ENCODE measurements at regions of chr4 and their contacts with region 1.

Region 1: GRCh38 chr4:178412455-178412854 is 970.2 kb upstream of the AGA start:
- DNase-seq: no peak
- H3K4me3 ChIP-seq: no peak overlapping the region
- H3K4me3 Mint-ChIP-seq: no peak overlapping the region
- H3K27ac Mint-ChIP-seq: no peak overlapping the region
- H3K4me1 ChIP-seq: no peaks in the 10 kb centered on the region
- H3K4me1 Mint-ChIP-seq: peaks cover 5% of the 10 kb centered on the region
- H3K27me3 ChIP-seq: no peaks in the 10 kb centered on the region
- H3K27me3 Mint-ChIP-seq: no peaks in the 10 kb centered on the region
- CTCF ChIP-seq: no peak

Region 2: DNA sequence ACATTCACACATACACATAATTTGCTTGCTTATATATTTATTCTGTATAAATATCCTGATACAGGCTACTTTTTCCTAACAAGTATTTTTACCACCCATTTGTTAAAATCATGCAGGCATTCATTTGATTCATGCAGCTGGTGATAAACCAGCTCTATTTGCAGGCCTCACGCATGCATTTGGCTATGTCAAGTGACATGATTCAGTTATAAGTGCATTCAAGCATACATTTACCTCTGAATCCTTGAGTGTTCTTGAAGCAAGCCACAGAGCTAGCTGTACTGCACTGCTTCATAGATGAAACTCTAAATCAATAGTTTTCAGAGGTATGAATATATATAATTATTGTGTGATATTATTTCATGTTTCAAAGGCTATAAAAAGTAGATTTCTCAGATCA is 426.2 kb before region 1 on chr4:
- CTCF ChIA-PET with region 1: no interaction called
- POLR2A ChIA-PET with region 1: no interaction called
- intact Hi-C with region 1: no loop called
- DNase-seq: no peak
- H3K4me3 ChIP-seq: no peak overlapping the region
- H3K4me3 Mint-ChIP-seq: no peak overlapping the region
- H3K27ac Mint-ChIP-seq: no peak overlapping the region
- H3K4me1 ChIP-seq: no peaks in the 10 kb centered on the region
- H3K4me1 Mint-ChIP-seq: no peaks in the 10 kb centered on the region
- H3K27me3 ChIP-seq: no peaks in the 10 kb centered on the region
- H3K27me3 Mint-ChIP-seq: no peaks in the 10 kb centered on the region
- CTCF ChIP-seq: no peak

Region 3: GRCh38 chr4:178395798-178396197 is 16.7 kb before region 1 on chr4:
- CTCF ChIA-PET with region 1: no interaction called
- POLR2A ChIA-PET with region 1: no interaction called
- intact Hi-C with region 1: loop called (anchors 1 kb)
- DNase-seq: peak in 1 of 2 experiments; percentile 17
- H3K4me3 ChIP-seq: no peak overlapping the region
- H3K4me3 Mint-ChIP-seq: no peak overlapping the region
- H3K27ac Mint-ChIP-seq: no peak overlapping the region
- H3K4me1 ChIP-seq: no peaks in the 10 kb centered on the region
- H3K4me1 Mint-ChIP-seq: no peaks in the 10 kb centered on the region
- H3K27me3 ChIP-seq: no peaks in the 10 kb centered on the region
- H3K27me3 Mint-ChIP-seq: no peaks in the 10 kb centered on the region
- CTCF ChIP-seq: peak in 1 of 2 experiments; percentile 42

Region 4: DNA sequence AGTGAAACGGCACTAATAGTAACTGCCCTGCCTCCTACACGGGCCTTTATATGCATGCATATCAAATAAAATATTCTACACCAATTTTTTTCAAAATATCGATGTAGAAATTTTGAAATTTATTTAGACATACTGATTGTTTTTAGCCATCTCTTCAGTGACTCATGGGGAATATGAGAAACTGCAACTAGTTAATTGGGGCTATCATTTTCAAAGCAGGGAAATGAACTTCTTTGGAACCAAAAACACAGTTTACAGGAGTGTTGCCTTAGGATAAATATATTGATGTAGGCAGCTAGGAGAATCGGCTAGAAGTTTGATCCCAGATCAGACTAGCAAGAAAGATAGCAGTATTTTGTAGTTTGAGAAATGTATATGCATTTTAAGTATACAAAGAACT is 40.6 kb after region 1 on chr4:
- CTCF ChIA-PET with region 1: no interaction called
- POLR2A ChIA-PET with region 1: no interaction called
- intact Hi-C with region 1: loop called (anchors 2 kb)
- DNase-seq: no peak
- H3K4me3 ChIP-seq: no peak overlapping the region
- H3K4me3 Mint-ChIP-seq: no peak overlapping the region
- H3K27ac Mint-ChIP-seq: no peak overlapping the region
- H3K4me1 ChIP-seq: no peaks in the 10 kb centered on the region
- H3K4me1 Mint-ChIP-seq: no peaks in the 10 kb centered on the region
- H3K27me3 ChIP-seq: no peaks in the 10 kb centered on the region
- H3K27me3 Mint-ChIP-seq: no peaks in the 10 kb centered on the region
- CTCF ChIP-seq: no peak

Measured in Caco-2 (cell line).